A549 (cell line): ENCODE measurements at regions of chr11 and their contacts with region 1.

Region 1: DNA sequence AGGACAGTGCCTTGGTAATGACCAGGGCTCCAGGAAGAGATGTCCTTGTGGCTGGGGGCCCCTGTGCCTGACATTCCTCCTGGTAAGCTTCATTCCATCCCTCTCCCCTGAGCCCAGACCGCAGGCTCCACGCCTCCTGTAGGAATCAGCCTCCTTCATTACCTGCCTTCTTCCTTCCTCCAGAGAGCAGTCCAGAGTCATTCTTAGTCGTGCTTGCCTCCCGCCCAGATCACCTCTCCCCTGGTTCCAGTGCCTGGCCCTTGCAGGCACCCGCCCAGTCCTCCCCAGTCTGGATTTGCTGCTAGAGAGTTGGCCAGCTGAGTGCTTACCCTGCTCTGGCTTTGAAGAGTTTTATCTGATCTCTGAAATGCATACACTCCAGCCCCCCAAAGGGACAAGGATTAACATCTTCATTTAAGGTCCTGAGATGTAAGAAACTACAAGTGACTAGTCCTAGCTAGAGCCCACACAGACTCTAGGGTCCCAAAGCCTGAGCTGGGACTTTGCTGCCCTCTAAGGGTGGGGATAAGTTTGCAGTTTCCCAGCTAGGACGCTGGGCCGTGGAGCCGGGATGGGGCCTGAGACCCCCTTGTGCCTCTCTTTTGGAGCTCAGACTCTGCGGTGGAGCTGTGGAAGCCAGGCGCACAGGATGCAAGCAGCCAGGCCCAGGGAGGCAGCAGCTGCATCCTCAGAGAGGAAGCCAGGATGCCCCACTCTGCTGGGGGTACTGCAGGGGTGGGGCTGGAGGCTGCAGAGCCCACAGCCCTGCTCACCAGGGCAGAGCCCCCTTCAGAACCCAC is 1.6 kb downstream of the NR1H3 start:
- DNase-seq: peak; percentile 58 to 75
- ATAC-seq: peak; percentile 74 to 89
- H3K4me3 ChIP-seq: no peak overlapping the region
- H3K27ac ChIP-seq: peak overlapping the region; percentile 52 to 91
- H3K4me1 ChIP-seq: peaks cover 43% of the 10 kb centered on the region
- CTCF ChIP-seq: peak; percentile 80
- EP300 ChIP-seq: no peak
- POLR2A ChIP-seq: no peak
- RAD21 ChIP-seq: peak; percentile 81 to 88

Region 2: GRCh38 chr11:47186076-47186936 is 73.1 kb before region 1 on chr11 and contains the start of gene PACSIN3:
- CTCF ChIA-PET with region 1: interaction called, 173 read pairs
- POLR2A ChIA-PET with region 1: no interaction called
- DNase-seq: peak; percentile 58 to 72
- ATAC-seq: peak; percentile 72 to 75
- H3K4me3 ChIP-seq: peak within 1 kb of the TSS; percentile 72
- H3K27ac ChIP-seq: peak within 1 kb of the TSS; percentile 84 to 98
- H3K4me1 ChIP-seq: peaks cover 47% of the 10 kb centered on the region
- CTCF ChIP-seq: no peak
- EP300 ChIP-seq: no peak
- POLR2A ChIP-seq: peak; percentile 59
- RAD21 ChIP-seq: no peak
- polyA plus RNA-seq, gene PACSIN3: 15.8 and 16.5 TPM in 2 replicates

Region 3: GRCh38 chr11:47204637-47204989 is 54.8 kb before region 1 on chr11:
- CTCF ChIA-PET with region 1: interaction called, 13 read pairs
- POLR2A ChIA-PET with region 1: no interaction called
- DNase-seq: peak; percentile 28 to 46
- ATAC-seq: peak; percentile 83 to 85
- H3K4me3 ChIP-seq: no peak overlapping the region
- H3K27ac ChIP-seq: peak overlapping the region in 1 of 2 experiments; percentile 49; a peak in 2 of 6 replicates
- H3K4me1 ChIP-seq: peaks cover 10% of the 10 kb centered on the region
- CTCF ChIP-seq: no peak
- EP300 ChIP-seq: no peak
- POLR2A ChIP-seq: no peak
- RAD21 ChIP-seq: no peak

Region 4: DNA sequence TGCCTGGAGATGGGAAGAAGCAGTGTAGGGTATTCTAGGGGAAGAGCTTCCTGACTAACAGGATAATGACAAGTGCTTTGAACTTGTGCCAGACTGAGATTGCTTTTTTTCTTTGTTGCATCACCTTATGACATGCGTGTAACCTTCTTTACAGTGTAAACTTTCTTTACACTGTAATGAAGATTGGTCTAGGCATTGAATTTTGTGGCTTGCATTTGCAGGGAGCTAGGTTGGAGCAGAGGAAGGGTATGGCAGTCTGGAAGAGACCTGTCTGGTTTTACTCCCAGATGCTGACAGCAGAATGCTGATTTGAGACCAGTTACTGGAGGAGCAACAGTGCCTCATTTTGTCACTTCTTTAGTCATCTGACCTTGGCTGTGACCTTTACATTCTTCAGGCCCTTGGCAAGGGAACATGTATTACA is 39.0 kb before region 1 on chr11:
- CTCF ChIA-PET with region 1: interaction called, 28 read pairs
- POLR2A ChIA-PET with region 1: interaction called, 10 read pairs
- DNase-seq: no peak
- ATAC-seq: no peak
- H3K4me3 ChIP-seq: no peak overlapping the region
- H3K27ac ChIP-seq: peak overlapping the region in 1 of 2 experiments; percentile 73; a peak in 3 of 6 replicates
- H3K4me1 ChIP-seq: peaks cover 45% of the 10 kb centered on the region
- CTCF ChIP-seq: no peak
- EP300 ChIP-seq: no peak
- POLR2A ChIP-seq: no peak
- RAD21 ChIP-seq: no peak

Region 5: DNA sequence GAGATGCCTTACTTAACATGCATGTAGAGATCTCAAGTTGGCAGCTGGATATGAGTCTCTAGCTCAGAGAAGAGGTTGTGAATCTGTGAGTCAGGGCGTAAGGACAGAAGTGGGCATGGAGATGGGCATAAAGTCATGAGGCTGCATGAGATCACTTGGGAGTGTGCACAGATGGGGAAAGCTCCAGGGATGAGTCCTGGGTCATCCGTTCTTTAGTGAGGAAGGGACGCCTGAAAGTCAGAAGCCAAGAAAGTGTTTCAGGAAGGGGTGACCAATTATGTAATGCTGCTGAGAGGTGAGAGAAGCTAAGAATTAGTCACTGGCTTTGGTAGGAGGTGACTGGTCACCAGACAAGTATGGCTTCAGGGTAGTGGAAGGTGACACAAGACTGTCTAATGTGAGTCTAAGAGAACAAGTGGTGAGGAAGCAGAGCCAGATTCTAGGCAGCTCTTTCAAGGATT is 17.5 kb before region 1 on chr11:
- CTCF ChIA-PET with region 1: interaction called, 141 read pairs
- POLR2A ChIA-PET with region 1: interaction called, 18 read pairs
- DNase-seq: no peak
- ATAC-seq: peak; percentile 17 to 28; a peak in 5 of 6 replicates
- H3K4me3 ChIP-seq: no peak overlapping the region
- H3K27ac ChIP-seq: peak overlapping the region in 1 of 2 experiments; percentile 4; a peak in 1 of 6 replicates
- H3K4me1 ChIP-seq: peaks cover 31% of the 10 kb centered on the region
- CTCF ChIP-seq: no peak
- EP300 ChIP-seq: no peak
- POLR2A ChIP-seq: no peak
- RAD21 ChIP-seq: no peak

Region 6: DNA sequence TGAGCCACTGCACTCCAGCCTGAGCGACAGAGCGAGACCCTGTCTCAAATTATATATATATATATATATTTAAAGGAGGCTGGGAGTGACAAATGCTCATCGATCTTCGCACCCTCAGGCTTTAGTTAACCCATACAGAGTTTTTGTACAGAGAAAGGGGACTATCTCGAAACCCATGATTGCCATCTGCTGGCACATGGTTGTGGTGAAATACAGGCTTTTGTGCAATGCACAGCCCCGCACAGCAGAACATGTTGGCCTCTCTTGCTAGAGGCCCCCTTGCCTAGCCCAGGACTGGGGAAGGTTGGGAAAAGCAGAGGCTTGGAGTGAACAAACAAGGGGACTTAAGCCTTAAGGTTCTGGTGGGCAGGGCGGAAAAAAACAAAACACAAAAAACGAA is 89.5 kb after region 1 on chr11:
- CTCF ChIA-PET with region 1: interaction called, 44 read pairs
- POLR2A ChIA-PET with region 1: no interaction called
- DNase-seq: peak; percentile 50 to 63
- ATAC-seq: peak; percentile 44 to 77; a peak in 3 of 6 replicates
- H3K4me3 ChIP-seq: no peak overlapping the region
- H3K27ac ChIP-seq: no peak overlapping the region
- H3K4me1 ChIP-seq: no peaks in the 10 kb centered on the region
- CTCF ChIP-seq: peak; percentile 33
- EP300 ChIP-seq: no peak
- POLR2A ChIP-seq: no peak
- RAD21 ChIP-seq: peak; percentile 50 to 69; a peak in 4 of 5 replicates

Region 7: DNA sequence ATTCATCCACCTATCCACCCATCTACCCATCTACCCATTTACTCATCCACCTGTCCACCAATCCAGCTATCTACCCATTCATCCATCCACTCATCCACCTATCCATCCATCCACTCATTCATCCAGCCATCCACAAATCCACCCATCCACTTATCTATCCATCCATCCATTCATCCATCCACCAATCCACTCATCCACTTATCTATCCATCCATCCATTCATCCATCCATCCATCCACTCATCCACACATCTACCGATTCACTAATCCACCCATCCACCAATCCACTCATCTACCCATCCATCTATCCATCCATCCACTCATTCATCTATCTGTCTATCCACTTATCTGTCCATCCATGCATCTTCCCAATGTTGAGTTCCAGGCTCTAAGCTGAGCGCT is 120.7 kb after region 1 on chr11:
- CTCF ChIA-PET with region 1: no interaction called
- POLR2A ChIA-PET with region 1: no interaction called
- DNase-seq: no peak
- ATAC-seq: no peak
- H3K4me3 ChIP-seq: no peak overlapping the region
- H3K27ac ChIP-seq: no peak overlapping the region
- H3K4me1 ChIP-seq: peaks cover 11% of the 10 kb centered on the region; the same call in 1 of the 3 replicates
- CTCF ChIP-seq: no peak
- EP300 ChIP-seq: no peak
- POLR2A ChIP-seq: no peak
- RAD21 ChIP-seq: no peak